GM13977 (cell line): ENCODE measurements at regions of chr3 and their contacts with region 1.

Region 1: DNA sequence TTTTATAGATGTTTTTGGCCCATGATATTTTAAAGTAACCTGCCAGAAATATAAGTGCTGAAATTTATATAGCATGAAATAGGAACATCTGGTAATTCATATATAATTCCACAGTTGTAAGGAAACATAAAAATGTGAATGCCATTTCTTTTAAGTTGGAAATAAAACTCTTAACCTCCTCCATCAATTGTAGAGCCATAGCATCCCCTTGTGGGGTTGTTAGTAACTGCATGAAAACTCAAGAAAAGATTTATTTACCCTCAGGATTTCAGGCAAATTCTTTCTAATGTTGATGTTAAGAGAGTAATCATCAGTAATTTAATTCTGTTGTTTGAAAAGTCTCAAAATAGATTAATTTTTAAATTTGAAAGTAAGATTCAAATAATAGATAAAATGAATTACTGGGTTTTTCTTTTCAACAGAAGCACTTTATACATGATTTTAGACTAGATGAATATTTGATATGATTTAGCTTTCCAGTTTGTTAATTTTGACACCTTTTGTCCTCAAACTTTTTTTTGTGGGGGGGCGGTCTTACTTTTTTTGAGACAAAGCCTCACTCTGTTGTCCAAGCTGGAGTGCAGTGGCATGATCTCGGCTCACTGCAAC is 74.7 kb downstream of the RASA2 start:
- DNase-seq: peak; percentile 28
- CTCF ChIP-seq: peak; percentile 87

Region 2: DNA sequence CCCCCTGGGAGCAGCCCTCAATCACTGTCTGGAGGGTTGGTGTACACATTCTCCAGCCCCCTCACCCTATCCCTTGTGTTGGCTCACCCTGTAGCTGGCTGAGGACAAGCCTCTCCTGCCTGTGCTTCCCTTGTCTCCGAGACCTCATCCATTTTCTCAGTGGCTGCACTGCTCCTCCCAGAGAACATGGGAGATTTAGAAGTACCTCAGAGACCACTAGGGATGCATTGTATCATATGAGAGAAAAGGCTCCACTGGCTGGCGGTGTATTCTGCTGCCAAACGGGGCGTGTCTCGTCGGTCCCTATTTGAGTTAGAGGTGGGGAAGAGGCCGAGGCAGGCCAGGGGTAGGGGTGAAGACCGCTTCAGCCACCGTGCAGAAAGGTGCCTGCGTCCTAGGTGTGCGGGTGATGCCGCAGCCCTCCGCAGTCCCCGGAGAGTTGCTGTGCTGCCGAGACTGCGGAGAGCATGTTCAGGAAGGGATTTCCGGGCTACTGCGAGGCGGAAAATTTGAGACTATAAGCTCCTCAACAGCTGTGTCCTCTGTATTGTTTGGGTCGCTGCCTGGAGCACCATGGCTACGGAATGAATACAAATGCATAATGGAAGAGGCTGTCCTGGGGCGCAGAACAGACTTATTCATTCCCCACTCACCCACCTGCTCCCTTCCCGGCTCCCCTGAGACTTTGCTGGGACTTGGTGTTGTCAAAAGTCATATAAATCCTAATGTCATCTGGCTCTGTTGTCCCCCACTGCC is 466.6 kb before region 1 on chr3:
- in situ Hi-C with region 1: no loop called
- DNase-seq: no peak
- CTCF ChIP-seq: no peak

Region 3: GRCh38 chr3:141303481-141304223 is 257.9 kb before region 1 on chr3:
- in situ Hi-C with region 1: loop called (anchors 10 kb)
- DNase-seq: peak; percentile 72
- CTCF ChIP-seq: peak; percentile 74

Region 4: DNA sequence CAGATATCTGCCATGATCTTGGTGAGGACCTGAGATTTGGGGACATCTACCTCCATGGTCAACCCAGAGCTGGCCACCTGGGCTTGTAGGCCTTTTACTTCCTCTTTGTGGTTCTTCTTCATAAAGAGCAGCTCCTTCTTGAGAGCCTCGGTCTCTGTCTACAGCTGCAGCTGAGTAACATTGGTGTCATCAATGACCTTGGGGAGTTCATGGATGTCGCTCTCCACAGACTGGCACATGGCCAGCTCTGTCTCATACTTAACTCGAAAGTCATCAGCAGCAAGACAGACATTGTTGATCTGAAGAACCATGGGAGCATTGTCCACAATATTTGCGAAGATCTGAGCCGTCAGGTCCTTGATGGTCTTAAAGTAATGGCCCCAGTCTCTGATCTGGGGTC is 90.4 kb before region 1 on chr3:
- in situ Hi-C with region 1: loop called (anchors 5 kb)
- DNase-seq: no peak
- CTCF ChIP-seq: no peak

Region 5: DNA sequence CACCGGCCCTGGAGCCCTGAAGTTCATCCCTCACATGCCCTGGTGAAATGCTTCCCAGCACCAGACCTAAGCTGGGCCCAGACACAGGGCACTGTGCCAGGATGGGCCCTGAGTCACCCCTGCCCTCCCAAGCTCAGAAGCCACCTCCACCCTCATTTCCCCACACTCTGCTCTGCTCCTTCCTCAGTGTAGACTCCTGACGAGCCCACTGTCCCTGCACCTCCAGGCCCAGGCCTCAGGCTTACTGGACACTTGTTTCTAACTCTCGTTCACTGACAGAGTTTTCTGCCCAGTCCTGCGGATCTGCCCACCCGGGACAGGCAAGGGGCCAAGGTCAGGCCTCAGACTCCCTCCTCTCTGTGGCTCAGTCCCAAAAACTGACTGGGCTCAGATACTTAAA is 64.0 kb after region 1 on chr3:
- in situ Hi-C with region 1: no loop called
- DNase-seq: no peak
- CTCF ChIP-seq: no peak